PC-3 (cell line): ENCODE measurements at regions of chr7 and their contacts with region 1.

Region 1: DNA sequence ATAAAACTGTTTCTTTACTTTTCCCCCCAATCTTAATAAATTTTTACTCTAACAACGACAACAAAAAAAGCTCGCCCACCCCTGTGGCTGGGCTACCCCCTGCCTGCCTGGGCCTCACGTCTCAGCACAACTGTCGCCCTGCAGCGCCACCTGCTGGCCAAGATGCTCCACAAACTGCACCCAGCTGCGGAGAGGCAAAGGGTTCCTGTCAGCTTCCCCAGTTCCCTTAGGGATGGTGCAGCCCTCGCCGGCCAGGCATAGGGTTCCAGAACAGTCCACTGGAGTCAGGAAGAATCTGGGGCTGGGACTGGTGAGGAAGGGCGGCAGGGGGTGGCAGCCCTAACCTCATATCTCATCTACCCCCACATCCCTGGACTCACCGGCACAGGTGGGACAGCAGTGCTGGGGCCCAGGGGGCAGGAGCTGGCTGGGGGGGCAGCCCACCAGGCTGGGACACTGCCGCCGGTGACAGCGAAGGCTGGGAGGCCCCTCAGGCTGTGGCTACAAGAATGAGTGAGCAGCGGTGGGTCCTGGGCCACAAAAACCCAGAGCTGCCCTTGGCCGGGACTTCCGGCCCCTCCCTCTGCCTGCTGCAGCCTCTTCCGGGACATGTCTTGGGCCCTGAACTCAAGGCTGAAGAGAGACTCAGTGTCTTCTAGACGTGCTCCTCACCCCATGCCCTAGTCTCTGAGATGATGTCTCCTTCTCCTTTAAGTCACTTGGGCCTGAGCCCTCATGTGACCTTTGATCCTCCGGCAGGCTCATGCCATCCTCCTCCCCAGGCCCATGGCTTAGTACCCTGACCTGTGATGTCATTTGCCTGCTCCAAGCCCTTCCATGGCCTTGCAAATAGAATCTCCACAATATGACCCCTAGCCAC is 21.2 kb downstream of the ATP6V1F start:
- DNase-seq: peak; percentile 81
- ATAC-seq: peak; percentile 47
- H3K4me3 ChIP-seq: no peak overlapping the region
- H3K27ac ChIP-seq: no peak overlapping the region
- H3K4me1 ChIP-seq: peaks cover 10% of the 10 kb centered on the region
- H3K27me3 ChIP-seq: no peaks in the 10 kb centered on the region
- CTCF ChIP-seq: peak; percentile 94

Region 2: DNA sequence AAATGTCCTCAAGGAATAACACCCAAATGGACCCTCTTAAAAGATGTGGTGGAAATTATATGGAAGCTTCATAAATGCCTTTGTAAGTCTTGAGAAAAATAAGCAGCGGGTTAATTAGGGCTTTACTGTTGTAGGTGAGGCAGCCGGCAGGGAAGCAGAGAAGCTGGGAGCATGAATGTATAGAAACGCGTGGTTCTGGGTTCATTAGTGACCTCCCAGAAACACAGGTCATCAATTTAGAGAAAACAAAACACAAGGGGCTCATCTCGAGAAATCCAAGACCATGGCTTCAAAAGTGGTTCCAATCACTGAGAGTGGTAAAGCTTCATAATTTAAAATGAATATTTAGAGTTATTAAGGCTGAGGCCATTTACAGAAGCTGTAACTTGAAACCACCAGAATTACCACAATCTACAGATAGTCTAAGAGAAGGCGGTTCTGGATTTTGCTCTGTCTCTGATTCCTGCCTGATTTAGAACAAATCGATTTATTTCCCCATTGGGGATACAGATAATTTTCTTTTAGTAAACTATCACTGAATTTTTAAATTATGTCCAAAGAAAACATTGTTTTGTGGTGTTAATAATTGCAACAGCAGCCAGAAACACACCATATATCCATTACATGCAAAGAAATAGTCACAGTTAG is 191.1 kb before region 1 on chr7:
- CTCF ChIA-PET with region 1: interaction called, 10 read pairs
- POLR2A ChIA-PET with region 1: no interaction called
- intact Hi-C with region 1: no loop called
- DNase-seq: no peak
- ATAC-seq: no peak
- H3K4me3 ChIP-seq: no peak overlapping the region
- H3K27ac ChIP-seq: no peak overlapping the region
- H3K4me1 ChIP-seq: no peaks in the 10 kb centered on the region
- H3K27me3 ChIP-seq: no peaks in the 10 kb centered on the region
- CTCF ChIP-seq: no peak

Region 3: GRCh38 chr7:128791121-128791961 is 92.5 kb before region 1 on chr7:
- CTCF ChIA-PET with region 1: no interaction called
- POLR2A ChIA-PET with region 1: no interaction called
- intact Hi-C with region 1: loop called (anchors 5 kb)
- DNase-seq: peak; percentile 57
- ATAC-seq: peak; percentile 91
- H3K4me3 ChIP-seq: peak overlapping the region; percentile 89
- H3K27ac ChIP-seq: no peak overlapping the region
- H3K4me1 ChIP-seq: no peaks in the 10 kb centered on the region
- H3K27me3 ChIP-seq: no peaks in the 10 kb centered on the region
- CTCF ChIP-seq: no peak

Region 4: DNA sequence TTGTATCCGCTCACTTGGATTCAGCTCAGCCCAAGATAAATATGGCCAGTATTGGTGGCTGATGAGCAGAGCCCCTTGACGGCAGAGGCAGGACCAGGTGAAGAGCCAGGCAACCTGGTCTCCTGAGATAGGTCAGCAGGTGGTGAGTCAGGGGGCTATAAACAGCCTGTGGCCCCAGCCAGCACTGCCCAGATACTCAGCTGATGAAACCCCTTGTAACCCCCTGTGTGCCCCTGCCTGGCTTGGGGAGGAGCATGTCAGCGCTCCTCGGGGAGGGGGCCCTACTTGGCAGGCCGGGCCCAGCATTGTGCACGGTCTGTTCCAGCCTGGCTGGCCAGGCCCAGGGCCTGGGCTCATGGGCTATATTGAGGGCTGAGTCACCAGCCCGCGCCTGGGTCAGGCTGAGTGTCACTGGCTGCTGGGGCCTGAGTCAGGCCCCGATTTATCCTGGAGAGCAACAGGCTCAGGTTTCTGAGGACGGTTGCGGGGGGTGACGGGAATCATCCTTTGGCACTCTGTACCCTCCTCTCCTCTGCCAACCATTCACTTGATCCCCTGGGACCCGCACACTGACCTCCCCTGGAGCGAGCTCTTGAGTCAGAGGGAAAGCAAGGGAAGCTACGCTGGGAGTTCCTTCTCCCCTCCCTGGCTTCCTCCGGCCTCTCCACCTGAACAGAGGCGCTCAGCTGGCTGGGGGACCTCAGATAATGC is 56.5 kb before region 1 on chr7:
- CTCF ChIA-PET with region 1: no interaction called
- POLR2A ChIA-PET with region 1: no interaction called
- intact Hi-C with region 1: no loop called
- DNase-seq: peak; percentile 78
- ATAC-seq: peak; percentile 66
- H3K4me3 ChIP-seq: no peak overlapping the region
- H3K27ac ChIP-seq: peak overlapping the region; percentile 85
- H3K4me1 ChIP-seq: peaks cover 46% of the 10 kb centered on the region
- H3K27me3 ChIP-seq: no peaks in the 10 kb centered on the region
- CTCF ChIP-seq: no peak